Motor neuron (in vitro differentiated cells): ENCODE measurements at regions of chr1 and their contacts with region 1.

Region 1: GRCh38 chr1:175373786-175374623 is 181.4 kb upstream of the KIAA0040 start:
- ATAC-seq: peak; percentile 66 to 99 (median 96)
- H3K4me3 ChIP-seq: no peak overlapping the region
- H3K27ac ChIP-seq: no peak overlapping the region
- H3K4me1 ChIP-seq: no peaks in the 10 kb centered on the region

Region 2: GRCh38 chr1:175628548-175629317 is 254.7 kb after region 1 on chr1:
- in situ Hi-C with region 1: no loop called
- ATAC-seq: peak in 3 of 8 experiments; percentile 4 to 44 (median 7)
- H3K4me3 ChIP-seq: no peak overlapping the region
- H3K27ac ChIP-seq: no peak overlapping the region
- H3K4me1 ChIP-seq: peaks cover 7 to 14% of the 10 kb centered on the region in 2 donors

Region 3: DNA sequence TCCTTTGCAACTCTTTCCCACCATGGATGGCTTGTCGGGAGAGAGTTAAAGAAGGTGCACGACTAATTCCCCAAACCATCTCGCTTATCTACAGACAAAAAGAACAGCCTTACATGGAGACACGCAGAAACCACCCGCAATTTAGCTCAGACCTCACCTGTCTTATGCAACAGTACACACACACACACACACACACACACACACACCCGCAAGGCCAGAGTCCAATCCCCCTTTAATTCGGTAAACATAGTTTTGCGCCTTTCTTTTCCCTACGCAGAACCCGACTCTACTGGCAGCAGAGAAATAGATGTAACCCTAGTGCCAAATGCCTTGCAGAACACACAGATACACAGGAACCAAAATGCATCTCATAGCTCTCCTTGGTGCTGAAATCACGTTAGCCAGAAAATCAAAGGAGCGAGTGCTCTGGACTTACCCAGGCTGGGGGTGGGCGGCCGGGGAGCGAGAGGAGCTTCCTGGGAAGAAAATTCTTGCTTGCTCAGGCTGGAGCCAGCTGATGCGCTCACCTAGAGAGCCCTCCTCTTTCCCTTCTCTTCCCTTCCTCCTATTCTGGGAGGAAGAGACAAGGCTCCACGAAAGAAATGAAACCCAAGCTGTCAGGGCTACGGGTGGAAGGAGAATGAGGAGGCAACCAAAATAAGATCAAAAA is 368.9 kb after region 1 on chr1:
- in situ Hi-C with region 1: loop called in 1 of 9 experiments (anchors 25 kb)
- ATAC-seq: peak; percentile 69 to 91 (median 89)
- H3K4me3 ChIP-seq: peak overlapping the region; percentile 11 to 38 (median 28)
- H3K27ac ChIP-seq: no peak overlapping the region
- H3K4me1 ChIP-seq: peaks cover 7 to 8% of the 10 kb centered on the region in 2 donors

Region 4: DNA sequence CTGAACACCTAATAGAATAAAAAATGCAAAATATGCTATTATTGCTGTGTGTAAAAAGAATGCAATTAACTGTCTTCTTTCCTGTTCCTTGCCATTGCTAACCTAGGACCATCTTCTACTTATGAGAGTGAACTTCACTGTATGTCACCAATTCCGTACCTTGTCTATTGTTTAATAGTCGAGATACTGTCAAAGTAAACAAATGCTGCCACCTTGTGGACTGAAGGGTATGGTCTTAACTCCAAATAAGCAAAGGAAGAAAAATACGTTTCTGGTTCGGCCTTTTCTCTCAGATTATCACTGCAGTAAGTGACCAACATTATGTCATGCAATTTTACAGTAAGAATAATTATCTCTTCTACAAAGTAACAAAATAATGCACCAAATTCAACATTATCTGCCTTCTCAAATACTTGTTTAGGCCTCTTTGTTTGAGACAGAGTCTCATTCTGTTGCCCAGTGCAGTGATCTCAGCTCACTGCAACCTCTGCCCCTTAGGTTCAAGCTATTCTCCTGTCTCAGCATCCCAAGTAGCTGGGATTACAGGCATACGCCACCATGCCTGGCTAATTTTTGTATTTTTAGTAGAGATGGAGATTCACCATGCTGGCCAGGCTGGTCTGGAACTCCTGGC is 699.6 kb after region 1 on chr1:
- in situ Hi-C with region 1: loop called in 2 of 9 experiments (anchors 25 kb)
- ATAC-seq: peak; percentile 66 to 89 (median 79)
- H3K4me3 ChIP-seq: no peak overlapping the region
- H3K27ac ChIP-seq: no peak overlapping the region
- H3K4me1 ChIP-seq: no peaks in the 10 kb centered on the region